ENCODE measurements at regions of chrX and their contacts with region 1.

Region 1: DNA sequence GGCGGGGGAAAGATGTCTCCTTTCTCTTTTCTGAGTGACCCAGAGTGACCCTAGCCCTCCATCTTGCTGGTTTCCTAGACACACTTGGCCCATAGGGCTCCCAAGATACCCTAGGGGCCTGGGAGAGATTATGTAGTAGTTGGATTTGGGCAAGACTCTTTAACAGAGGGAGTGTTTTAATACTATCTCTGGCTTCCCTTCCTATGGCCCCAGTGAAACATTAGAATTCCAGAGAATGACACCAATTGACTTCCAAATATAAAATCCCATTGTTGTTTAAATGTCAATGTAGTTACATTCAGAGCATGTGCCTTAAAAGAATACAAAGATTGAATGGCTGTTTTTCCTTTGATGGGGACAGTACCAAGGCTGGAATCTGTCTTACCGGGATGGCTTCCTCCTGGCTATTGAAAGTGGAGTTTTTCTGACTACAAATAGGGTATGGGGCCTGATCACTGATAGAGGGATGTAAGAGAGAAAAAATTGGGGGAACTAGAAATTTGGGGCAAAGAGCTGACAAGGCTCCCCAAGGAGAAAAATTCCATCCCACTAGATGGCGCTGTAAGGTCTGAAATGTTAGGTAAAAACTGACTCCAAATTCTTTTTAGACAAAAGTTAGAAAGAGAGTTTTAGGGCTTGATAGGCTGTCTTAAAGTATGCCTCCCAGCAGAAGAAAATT is 10.7 kb downstream of the TENT5D start:
- DNase-seq: no peak
- H3K4me3 Mint-ChIP-seq: no peak overlapping the region
- H3K27ac Mint-ChIP-seq: no peak overlapping the region
- H3K4me1 Mint-ChIP-seq: no peaks in the 10 kb centered on the region
- H3K27me3 Mint-ChIP-seq: no peaks in the 10 kb centered on the region

Region 2: DNA sequence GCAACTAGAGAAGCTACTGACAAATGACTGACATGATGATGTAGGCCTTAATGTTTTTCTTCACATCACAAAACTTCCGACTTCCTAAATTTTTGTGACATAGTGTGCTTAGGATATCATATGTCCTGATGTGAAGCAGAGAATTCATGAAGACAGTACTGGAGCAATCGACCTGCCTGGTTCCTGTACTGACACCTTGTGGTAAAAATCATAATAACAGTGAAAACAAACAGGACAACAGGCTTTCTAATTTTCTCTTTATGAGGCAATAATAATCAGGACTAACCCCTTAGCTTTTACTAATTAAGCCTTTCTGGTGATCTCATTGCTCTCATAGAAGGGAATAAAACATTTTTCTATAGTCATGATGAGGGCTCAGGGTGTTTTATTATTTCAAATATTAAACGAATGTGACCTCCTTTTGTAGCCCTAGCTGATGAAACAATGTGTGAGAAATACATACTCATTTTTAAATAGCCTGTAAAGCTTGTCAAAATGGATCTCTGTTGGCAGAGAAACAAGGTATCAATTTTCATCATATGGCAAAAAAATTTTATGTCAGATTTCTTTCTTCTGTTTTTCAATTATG is 147.6 kb after region 1 on chrX:
- intact Hi-C with region 1: loop called (anchors 5 kb)
- DNase-seq: no peak
- H3K4me3 Mint-ChIP-seq: no peak overlapping the region
- H3K27ac Mint-ChIP-seq: no peak overlapping the region
- H3K4me1 Mint-ChIP-seq: no peaks in the 10 kb centered on the region
- H3K27me3 Mint-ChIP-seq: no peaks in the 10 kb centered on the region